Naive thymus-derived CD4-positive, alpha-beta T cell (primary cell): ENCODE measurements at regions of chr9 and their contacts with region 1.

Region 1: DNA sequence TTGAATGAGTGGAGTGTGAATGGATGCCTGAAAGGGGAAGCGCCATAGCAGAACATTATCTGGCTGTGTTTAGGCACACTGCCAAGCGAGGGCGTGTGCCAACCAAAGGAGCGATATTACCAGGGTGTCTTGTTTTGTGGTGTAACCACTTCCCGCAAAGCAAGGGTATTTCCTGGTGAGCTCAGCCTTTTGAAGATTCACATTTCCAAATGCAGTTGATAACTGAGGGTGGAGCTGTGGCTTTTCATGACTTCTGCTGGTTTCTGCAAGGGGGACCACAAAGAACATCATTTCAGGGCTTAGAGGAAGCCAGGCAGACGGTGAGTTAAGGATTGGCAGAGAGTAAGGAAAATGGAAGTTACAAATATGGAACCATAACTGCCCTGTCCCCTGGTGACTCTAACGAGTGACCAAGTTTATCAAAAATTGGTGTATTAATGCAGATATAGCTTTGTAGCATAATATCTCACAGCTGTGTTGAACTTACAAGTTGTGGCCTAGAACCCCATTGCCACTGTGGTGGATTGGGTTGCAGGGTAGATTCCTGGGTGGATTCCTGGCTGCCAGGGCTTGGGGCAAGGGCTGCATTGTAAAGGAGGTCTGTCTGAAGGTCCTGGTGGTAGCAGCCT is 71.4 kb downstream of the RALGPS1 start:
- DNase-seq: peak; percentile 57 to 97 (median 95)
- ATAC-seq: peak; percentile 92
- H3K4me3 ChIP-seq: peak overlapping the region; percentile 5
- H3K4me3 Mint-ChIP-seq: peak overlapping the region; percentile 58 to 88 (median 76)
- H3K27ac ChIP-seq: no peak overlapping the region
- H3K27ac Mint-ChIP-seq: peak overlapping the region; percentile 44 to 91 (median 81)
- H3K4me1 ChIP-seq: peaks cover 43 to 72% of the 10 kb centered on the region in 2 donors
- H3K4me1 Mint-ChIP-seq: peaks cover 53 to 69% (median 63%) of the 10 kb centered on the region in 7 donors
- H3K27me3 ChIP-seq: peaks cover 0 to 4% of the 10 kb centered on the region in 2 donors
- H3K27me3 Mint-ChIP-seq: peaks cover 56 to 86% (median 70%) of the 10 kb centered on the region in 5 donors

Region 2: GRCh38 chr9:126939821-126940221 is 46.2 kb before region 1 on chr9:
- CTCF ChIA-PET with region 1: interaction called, 3 read pairs
- POLR2A ChIA-PET with region 1: no interaction called
- intact Hi-C with region 1: loop called in 1 of 2 experiments (anchors 1 kb)
- DNase-seq: no peak
- ATAC-seq: no peak
- H3K4me3 ChIP-seq: no peak overlapping the region
- H3K4me3 Mint-ChIP-seq: no peak overlapping the region
- H3K27ac ChIP-seq: no peak overlapping the region
- H3K27ac Mint-ChIP-seq: no peak overlapping the region
- H3K4me1 ChIP-seq: no peaks in the 10 kb centered on the region
- H3K4me1 Mint-ChIP-seq: peaks cover 4 to 7% (median 5%) of the 10 kb centered on the region in 7 donors
- H3K27me3 ChIP-seq: no peaks in the 10 kb centered on the region
- H3K27me3 Mint-ChIP-seq: peaks cover 0 to 39% (median 22%) of the 10 kb centered on the region in 5 donors

Region 3: DNA sequence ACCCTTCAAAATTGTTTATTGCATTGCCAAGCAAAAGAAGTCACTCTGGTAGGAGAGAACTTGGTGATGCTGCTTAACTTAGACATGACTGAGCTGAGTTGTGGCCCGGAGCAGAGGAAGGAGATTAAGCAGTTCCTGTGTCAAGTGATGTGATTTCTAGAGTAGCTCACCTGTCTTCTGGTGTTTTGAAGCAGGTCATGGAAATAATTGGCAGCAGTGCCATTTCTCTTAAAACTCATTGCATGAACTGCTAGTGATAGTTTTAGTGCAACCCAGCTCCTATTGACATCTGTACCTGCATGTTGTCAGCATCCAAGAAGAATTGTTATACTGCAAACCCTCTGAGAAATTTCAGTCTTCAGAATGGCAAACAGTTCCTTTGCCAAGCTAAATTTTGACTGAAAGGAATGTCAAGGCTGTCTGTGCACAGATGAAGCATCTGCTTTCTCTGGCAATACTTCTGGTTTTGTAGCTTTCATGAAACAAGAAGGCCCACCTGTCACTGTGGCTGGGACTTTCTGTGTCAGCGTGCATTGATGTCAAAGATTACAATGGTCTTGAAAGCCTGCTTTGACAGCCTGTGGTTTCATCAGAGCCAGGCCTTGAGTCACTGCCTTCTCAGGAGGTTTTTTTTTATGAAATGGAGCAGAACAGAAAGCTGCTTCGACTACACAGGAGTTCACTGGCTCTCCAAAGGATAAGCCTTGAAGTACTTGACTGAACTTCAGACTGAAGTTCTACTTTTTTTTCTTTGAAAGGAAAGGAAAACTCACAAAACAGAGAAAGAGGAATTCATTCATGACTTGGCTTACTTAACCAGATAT is 19.2 kb after region 1 on chr9:
- CTCF ChIA-PET with region 1: interaction called, 7 read pairs
- POLR2A ChIA-PET with region 1: interaction called, 9 read pairs
- intact Hi-C with region 1: loop called (anchors 1 kb)
- DNase-seq: peak in 8 of 9 donors; percentile 46 to 82 (median 74)
- ATAC-seq: peak; percentile 97
- H3K4me3 ChIP-seq: no peak overlapping the region
- H3K4me3 Mint-ChIP-seq: peak overlapping the region in 7 of 10 donors; percentile 13 to 56 (median 47)
- H3K27ac ChIP-seq: no peak overlapping the region
- H3K27ac Mint-ChIP-seq: peak overlapping the region in 8 of 9 donors; percentile 1 to 83 (median 64)
- H3K4me1 ChIP-seq: peaks cover 18 to 23% of the 10 kb centered on the region in 2 donors
- H3K4me1 Mint-ChIP-seq: peaks cover 15 to 36% (median 19%) of the 10 kb centered on the region in 7 donors
- H3K27me3 ChIP-seq: peaks cover 0 to 4% of the 10 kb centered on the region in 2 donors
- H3K27me3 Mint-ChIP-seq: peaks cover 14 to 29% (median 20%) of the 10 kb centered on the region in 5 donors

Region 4: DNA sequence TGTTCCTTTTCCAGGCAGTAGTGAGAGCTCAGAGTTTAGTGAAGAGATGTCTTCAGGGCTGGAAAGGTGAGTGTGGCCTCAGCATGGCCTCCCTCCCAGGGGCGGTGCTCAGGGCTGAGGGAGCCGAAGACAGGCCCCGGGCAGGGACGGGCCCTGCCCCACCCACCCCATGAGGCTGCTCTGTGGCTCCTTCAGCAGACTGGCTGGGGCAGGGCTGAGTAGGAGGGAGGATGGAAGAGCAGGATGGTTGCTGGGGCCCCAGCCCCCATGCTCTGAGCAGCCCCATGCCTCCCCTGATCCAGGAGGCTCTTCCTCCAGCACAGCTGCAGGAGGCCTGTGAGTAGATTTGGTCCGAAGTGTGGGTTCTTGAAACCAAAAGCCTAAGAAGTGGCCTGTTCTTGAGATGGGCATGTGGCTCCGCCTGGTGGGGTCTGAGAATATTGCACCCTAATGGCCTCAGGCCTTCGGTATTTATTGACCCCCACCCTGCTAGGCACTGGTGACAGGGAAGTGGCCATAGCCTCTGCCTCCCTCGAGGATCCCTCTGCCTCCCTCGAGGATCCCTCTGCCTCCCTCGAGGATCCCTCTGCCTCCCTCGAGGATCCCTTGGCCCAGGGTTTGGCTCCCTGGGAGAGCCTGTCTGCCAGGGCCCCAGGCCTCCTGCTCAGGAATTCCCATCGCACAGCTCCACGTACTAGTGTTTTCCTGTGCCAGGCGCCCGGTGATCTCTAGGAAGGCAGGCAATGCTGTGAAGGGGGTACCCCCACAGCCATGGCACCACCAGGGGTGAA is 213.2 kb after region 1 on chr9:
- CTCF ChIA-PET with region 1: interaction called, 4 read pairs
- POLR2A ChIA-PET with region 1: no interaction called
- intact Hi-C with region 1: loop called in 1 of 2 experiments (anchors 1 kb)
- DNase-seq: peak; percentile 56 to 78 (median 69)
- ATAC-seq: peak; percentile 86
- H3K4me3 ChIP-seq: no peak overlapping the region
- H3K4me3 Mint-ChIP-seq: no peak overlapping the region
- H3K27ac ChIP-seq: no peak overlapping the region
- H3K27ac Mint-ChIP-seq: no peak overlapping the region
- H3K4me1 ChIP-seq: peaks cover 0 to 5% of the 10 kb centered on the region in 2 donors
- H3K4me1 Mint-ChIP-seq: peaks cover 9 to 17% (median 13%) of the 10 kb centered on the region in 7 donors
- H3K27me3 ChIP-seq: no peaks in the 10 kb centered on the region
- H3K27me3 Mint-ChIP-seq: peaks cover 0 to 26% (median 2%) of the 10 kb centered on the region in 5 donors

Region 5: GRCh38 chr9:127388037-127388855 is 402.3 kb after region 1 on chr9:
- CTCF ChIA-PET with region 1: no interaction called
- POLR2A ChIA-PET with region 1: interaction called, 3 read pairs
- intact Hi-C with region 1: loop called (anchors 1 to 5 kb)
- DNase-seq: peak; percentile 67 to 97 (median 94)
- ATAC-seq: peak; percentile 98
- H3K4me3 ChIP-seq: no peak overlapping the region
- H3K4me3 Mint-ChIP-seq: peak overlapping the region; percentile 16 to 73 (median 55)
- H3K27ac ChIP-seq: no peak overlapping the region
- H3K27ac Mint-ChIP-seq: peak overlapping the region; percentile 19 to 94 (median 82)
- H3K4me1 ChIP-seq: peaks cover 13 to 20% of the 10 kb centered on the region in 2 donors
- H3K4me1 Mint-ChIP-seq: peaks cover 23 to 44% (median 28%) of the 10 kb centered on the region in 7 donors
- H3K27me3 ChIP-seq: peaks cover 6 to 46% of the 10 kb centered on the region in 2 donors
- H3K27me3 Mint-ChIP-seq: peaks cover 65 to 78% (median 72%) of the 10 kb centered on the region in 5 donors

Region 6: DNA sequence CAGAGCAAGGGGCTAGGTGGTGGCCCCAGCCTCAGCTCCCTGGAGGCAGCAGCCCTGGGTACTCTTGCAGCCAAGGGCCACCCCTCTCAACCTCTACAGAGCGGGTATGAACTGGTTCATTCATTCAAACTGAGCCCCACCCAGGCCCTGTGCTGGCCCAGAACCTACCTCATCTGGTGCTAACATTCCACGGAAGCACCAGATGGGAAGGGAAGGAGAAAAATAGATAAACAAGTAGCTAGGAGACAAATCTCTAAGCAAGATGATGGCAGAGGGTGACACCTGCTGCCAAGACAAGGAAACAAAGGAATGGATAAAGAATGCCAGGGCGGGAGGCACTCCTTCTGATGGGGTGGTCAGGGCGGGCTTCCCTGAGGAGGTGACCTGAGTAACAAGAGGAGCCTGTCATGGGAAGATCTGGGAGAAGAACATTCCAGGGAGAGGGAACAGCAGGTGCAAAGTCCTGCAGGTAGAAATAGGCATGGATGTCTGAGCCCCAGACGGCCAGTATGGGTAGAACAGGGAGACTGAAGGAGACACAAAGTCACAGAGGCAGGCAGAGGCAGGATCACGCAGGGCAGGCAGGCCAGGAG is 924.7 kb after region 1 on chr9:
- CTCF ChIA-PET with region 1: no interaction called
- POLR2A ChIA-PET with region 1: no interaction called
- intact Hi-C with region 1: no loop called
- DNase-seq: peak in 1 of 9 donors; percentile 3
- ATAC-seq: no peak
- H3K4me3 ChIP-seq: no peak overlapping the region
- H3K4me3 Mint-ChIP-seq: peak overlapping the region in 2 of 10 donors; percentile 37 to 77
- H3K27ac ChIP-seq: no peak overlapping the region
- H3K27ac Mint-ChIP-seq: peak overlapping the region; percentile 69 to 95 (median 83)
- H3K4me1 ChIP-seq: peaks cover 26 to 33% of the 10 kb centered on the region in 2 donors
- H3K4me1 Mint-ChIP-seq: peaks cover 23 to 50% (median 40%) of the 10 kb centered on the region in 7 donors
- H3K27me3 ChIP-seq: no peaks in the 10 kb centered on the region
- H3K27me3 Mint-ChIP-seq: no peaks in the 10 kb centered on the region

Region 7: DNA sequence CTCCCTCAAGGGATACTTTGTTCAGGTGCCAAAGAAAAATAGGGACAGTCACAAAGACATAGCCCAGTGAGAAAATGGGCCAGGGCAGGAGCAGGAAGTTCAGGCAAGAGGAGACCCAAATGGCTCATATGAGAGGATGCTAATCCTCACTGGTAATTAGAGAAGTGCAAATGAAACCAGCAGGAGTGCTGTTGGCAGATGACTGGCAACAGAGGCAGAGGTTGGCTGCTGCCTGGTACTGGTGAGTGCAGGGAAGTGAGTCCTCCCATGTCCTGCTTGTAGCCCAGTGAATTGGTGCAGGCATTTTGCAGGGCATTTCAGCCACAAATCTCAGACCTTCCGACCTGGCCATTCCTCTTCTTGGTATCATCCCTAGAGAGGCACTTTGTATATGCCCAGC is 1493.3 kb after region 1 on chr9:
- CTCF ChIA-PET with region 1: no interaction called
- POLR2A ChIA-PET with region 1: no interaction called
- intact Hi-C with region 1: no loop called
- DNase-seq: no peak
- ATAC-seq: no peak
- H3K4me3 ChIP-seq: no peak overlapping the region
- H3K4me3 Mint-ChIP-seq: no peak overlapping the region
- H3K27ac ChIP-seq: no peak overlapping the region
- H3K27ac Mint-ChIP-seq: no peak overlapping the region
- H3K4me1 ChIP-seq: no peaks in the 10 kb centered on the region
- H3K4me1 Mint-ChIP-seq: peaks cover 0 to 2% (median 0%) of the 10 kb centered on the region in 7 donors
- H3K27me3 ChIP-seq: no peaks in the 10 kb centered on the region
- H3K27me3 Mint-ChIP-seq: no peaks in the 10 kb centered on the region